Activated CD4-positive, alpha-beta T cell treated with anti-CD3 and anti-CD28 coated beads for 36 hours (primary cell): ENCODE measurements at regions of chr12 and their contacts with region 1.

Region 1: DNA sequence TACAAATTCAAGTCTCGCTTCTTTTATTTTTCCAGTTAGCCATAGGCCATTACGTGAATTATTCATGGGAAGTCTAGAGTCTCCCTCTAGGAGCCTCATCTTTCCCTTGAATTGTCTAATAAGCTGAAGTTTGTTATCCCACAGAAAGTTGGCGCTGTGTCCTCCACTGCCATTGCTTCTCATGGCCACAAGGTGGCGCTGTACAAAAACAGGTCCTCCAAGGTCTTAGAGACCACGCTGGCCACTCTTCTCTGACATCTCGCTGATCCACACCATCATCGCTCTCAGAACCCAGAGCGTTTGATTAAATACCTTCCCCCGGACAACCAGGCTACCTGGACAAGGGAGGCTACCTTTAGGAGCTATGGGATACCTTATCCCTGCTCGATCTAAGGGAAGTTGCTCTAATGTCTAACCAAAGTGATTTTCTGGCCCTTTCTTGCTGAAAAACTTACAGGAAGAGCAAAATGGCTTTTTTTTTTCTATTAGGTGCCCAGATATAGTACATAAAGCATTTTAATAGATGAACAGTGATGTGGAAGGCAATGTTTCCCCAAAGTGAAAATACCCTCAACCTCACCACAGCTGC is 110.0 kb downstream of the CCDC60 start:
- DNase-seq: peak; percentile 71
- ATAC-seq: peak; percentile 55
- H3K4me3 Mint-ChIP-seq: no peak overlapping the region
- H3K27ac Mint-ChIP-seq: no peak overlapping the region
- H3K4me1 Mint-ChIP-seq: peaks cover 3% of the 10 kb centered on the region
- H3K27me3 Mint-ChIP-seq: peaks cover 22% of the 10 kb centered on the region

Region 2: GRCh38 chr12:119208622-119209061 is 235.9 kb before region 1 on chr12:
- CTCF ChIA-PET with region 1: no interaction called
- POLR2A ChIA-PET with region 1: no interaction called
- intact Hi-C with region 1: no loop called
- DNase-seq: no peak
- ATAC-seq: no peak
- H3K4me3 Mint-ChIP-seq: no peak overlapping the region
- H3K27ac Mint-ChIP-seq: no peak overlapping the region
- H3K4me1 Mint-ChIP-seq: no peaks in the 10 kb centered on the region
- H3K27me3 Mint-ChIP-seq: no peaks in the 10 kb centered on the region

Region 3: GRCh38 chr12:119432949-119433348 is 11.6 kb before region 1 on chr12:
- CTCF ChIA-PET with region 1: interaction called, 32 read pairs
- POLR2A ChIA-PET with region 1: no interaction called
- intact Hi-C with region 1: no loop called
- DNase-seq: no peak
- ATAC-seq: no peak
- H3K4me3 Mint-ChIP-seq: no peak overlapping the region
- H3K27ac Mint-ChIP-seq: no peak overlapping the region
- H3K4me1 Mint-ChIP-seq: no peaks in the 10 kb centered on the region
- H3K27me3 Mint-ChIP-seq: peaks cover 8% of the 10 kb centered on the region

Region 4: DNA sequence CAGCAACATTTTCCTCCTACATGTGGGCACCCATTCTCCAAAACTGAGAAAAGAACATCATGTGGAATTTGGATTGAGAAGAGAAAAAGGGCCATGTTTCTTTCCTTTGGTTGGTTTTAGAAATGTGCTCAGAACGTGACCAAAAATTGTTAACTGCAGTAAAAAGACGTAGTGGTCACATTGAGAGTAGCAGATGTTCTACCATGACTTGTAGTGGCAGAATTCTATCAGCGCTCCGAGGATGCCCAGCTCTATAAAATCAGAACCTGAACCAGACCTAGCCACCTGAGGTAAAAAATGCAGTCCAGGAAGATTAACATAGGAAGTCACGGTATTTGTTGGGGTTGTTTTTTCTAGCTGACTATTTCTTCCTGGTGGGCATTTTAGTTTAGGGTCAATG is 47.3 kb after region 1 on chr12:
- CTCF ChIA-PET with region 1: no interaction called
- POLR2A ChIA-PET with region 1: no interaction called
- intact Hi-C with region 1: no loop called
- DNase-seq: no peak
- ATAC-seq: no peak
- H3K4me3 Mint-ChIP-seq: no peak overlapping the region
- H3K27ac Mint-ChIP-seq: no peak overlapping the region
- H3K4me1 Mint-ChIP-seq: no peaks in the 10 kb centered on the region
- H3K27me3 Mint-ChIP-seq: peaks cover 8% of the 10 kb centered on the region

Region 5: GRCh38 chr12:119544765-119545625 is 100.4 kb after region 1 on chr12:
- CTCF ChIA-PET with region 1: interaction called, 51 read pairs
- POLR2A ChIA-PET with region 1: no interaction called
- intact Hi-C with region 1: loop called (anchors 1 kb)
- DNase-seq: peak; percentile 72
- ATAC-seq: peak; percentile 64
- H3K4me3 Mint-ChIP-seq: no peak overlapping the region
- H3K27ac Mint-ChIP-seq: no peak overlapping the region
- H3K4me1 Mint-ChIP-seq: no peaks in the 10 kb centered on the region
- H3K27me3 Mint-ChIP-seq: peaks cover 29% of the 10 kb centered on the region

Region 6: DNA sequence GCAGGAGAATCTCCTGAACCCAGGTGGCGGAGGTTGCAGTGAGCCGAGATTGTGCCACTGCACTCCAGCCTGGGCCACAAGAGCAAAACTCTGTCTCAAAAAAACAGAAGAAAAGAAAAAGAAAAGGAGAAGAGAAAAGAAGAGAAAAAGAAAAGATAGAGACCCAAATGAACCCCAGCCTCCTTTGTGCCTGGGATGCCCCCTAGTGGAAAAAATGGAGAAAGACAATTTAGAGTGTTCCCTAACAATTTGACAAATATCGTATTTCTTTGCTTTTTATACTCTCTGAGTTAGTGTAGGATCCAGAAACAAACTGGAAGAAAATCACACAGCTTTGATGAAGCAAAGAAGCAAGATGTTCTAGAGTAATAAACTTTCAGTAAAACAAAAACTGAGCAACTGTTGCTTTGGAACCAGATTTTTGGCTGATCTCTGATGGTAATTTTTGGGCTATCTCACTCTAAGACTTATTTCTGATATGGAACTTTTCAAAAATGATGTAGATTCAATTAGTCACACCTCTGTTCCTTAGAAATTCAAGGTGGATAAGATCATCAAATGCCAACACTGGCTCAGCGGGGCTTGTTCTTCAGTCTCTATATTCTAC is 204.8 kb after region 1 on chr12:
- CTCF ChIA-PET with region 1: interaction called, 19 read pairs
- POLR2A ChIA-PET with region 1: no interaction called
- intact Hi-C with region 1: loop called (anchors 1 to 2 kb)
- DNase-seq: no peak
- ATAC-seq: no peak
- H3K4me3 Mint-ChIP-seq: no peak overlapping the region
- H3K27ac Mint-ChIP-seq: no peak overlapping the region
- H3K4me1 Mint-ChIP-seq: no peaks in the 10 kb centered on the region
- H3K27me3 Mint-ChIP-seq: peaks cover 2% of the 10 kb centered on the region

Region 7: DNA sequence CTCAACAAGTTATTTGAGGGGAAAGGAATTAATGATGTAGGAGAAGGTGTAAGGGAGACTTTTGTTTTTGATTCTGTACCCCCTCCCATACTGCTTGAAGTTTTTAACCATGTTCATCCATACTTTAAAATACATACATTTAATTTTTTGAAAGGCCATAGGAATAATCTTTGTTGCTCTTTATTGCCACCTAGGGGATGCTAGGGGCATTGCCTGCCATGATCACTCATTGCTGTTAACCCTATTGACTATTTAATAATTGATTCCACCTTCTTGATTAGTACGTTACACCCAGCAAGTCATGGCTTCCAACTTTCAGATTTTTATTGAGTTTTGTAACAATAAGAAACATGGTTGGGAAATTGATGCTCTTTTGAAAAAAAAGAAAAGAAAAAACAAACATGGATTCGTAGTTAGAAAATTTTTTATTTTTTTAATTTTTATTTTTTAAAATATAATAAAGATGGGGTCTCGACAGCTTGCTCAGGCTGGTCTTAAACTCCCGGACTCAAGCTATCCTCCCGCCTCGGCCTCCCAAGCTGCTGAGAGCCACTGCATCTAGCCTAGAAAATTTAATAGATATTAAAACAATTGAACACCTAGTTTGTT is 214.8 kb after region 1 on chr12:
- CTCF ChIA-PET with region 1: interaction called, 5 read pairs
- POLR2A ChIA-PET with region 1: no interaction called
- intact Hi-C with region 1: loop called in 1 of 2 experiments (anchors 1 kb)
- DNase-seq: peak; percentile 61
- ATAC-seq: peak; percentile 53
- H3K4me3 Mint-ChIP-seq: no peak overlapping the region
- H3K27ac Mint-ChIP-seq: no peak overlapping the region
- H3K4me1 Mint-ChIP-seq: no peaks in the 10 kb centered on the region
- H3K27me3 Mint-ChIP-seq: no peaks in the 10 kb centered on the region

Region 8: DNA sequence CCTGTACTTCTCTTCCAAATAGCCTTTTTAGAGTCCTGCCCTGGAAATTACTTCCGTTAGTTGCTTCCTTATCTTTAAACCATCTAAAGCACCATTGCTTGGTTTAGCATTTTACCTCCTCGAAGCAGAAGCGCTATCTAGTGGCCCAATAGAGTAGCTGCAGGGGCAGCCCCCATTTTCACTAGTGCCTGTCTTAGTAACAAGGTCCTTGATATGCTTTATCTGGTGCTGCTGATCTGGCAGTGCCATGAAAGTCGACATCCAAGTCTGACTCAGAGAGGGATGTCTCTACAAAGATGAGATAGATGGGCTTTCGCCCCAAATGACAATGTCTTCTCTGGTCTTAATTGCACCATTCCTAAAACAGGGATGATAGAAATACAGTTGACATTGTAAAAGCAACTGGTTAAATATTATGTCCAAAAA is 457.5 kb after region 1 on chr12:
- CTCF ChIA-PET with region 1: interaction called, 5 read pairs
- POLR2A ChIA-PET with region 1: no interaction called
- intact Hi-C with region 1: loop called in 1 of 2 experiments (anchors 1 kb)
- DNase-seq: peak; percentile 88
- ATAC-seq: peak; percentile 99
- H3K4me3 Mint-ChIP-seq: no peak overlapping the region
- H3K27ac Mint-ChIP-seq: no peak overlapping the region
- H3K4me1 Mint-ChIP-seq: peaks cover 8% of the 10 kb centered on the region
- H3K27me3 Mint-ChIP-seq: no peaks in the 10 kb centered on the region